ENCODE measurements at regions of chr17 and their contacts with region 1.

Region 1: DNA sequence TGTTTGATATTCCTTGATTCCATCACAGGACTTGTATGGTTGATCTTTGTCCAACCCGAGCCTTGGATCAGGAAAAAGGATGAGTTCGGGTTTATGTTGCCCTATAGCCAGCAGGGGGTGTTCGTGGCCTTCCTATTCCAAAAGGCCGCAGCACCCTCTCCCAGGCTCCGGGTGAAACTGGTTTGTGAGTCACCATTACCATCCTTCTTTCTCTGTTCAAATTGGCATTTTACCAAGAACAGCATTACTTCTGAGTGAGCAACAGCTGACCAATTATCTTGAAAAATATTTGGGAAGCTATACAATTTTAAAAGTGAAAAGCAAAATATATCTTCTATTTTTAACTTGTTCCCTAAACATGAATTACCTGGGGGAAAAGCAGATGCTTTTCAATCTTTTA is 24.3 kb upstream of the KRT20 start:
- DNase-seq: peak; percentile 79 to 89
- H3K4me3 ChIP-seq: no peak overlapping the region
- H3K27ac ChIP-seq: peak overlapping the region; percentile 23 to 59
- H3K4me1 ChIP-seq: peaks cover 0 to 29% (median 14%) of the 10 kb centered on the region in 4 donors
- H3K27me3 ChIP-seq: peaks cover 0 to 7% of the 10 kb centered on the region in 2 donors
- CTCF ChIP-seq: peak; percentile 70 to 86

Region 2: DNA sequence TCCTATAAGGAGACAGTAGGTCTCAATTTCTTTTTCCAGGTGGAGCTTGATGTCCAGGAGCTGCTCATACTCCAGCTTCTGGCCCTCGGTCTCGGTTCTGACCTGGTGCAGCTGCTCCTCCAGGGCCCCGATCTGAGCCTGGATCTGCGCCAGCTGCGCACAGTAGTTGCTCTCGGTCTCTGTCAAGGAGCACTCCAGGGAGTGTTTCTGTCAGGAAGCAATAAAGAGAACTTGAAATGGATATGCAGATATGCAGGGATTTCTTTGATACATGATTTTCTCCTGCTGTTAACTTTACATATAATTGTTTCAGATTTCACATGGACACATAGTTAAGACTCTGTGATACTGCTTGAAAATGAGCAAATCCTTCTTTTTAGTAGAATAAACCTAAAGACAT is 159.0 kb before region 1 on chr17:
- intact Hi-C with region 1: no loop called
- DNase-seq: no peak
- H3K4me3 ChIP-seq: no peak overlapping the region
- H3K27ac ChIP-seq: no peak overlapping the region
- H3K4me1 ChIP-seq: no peaks in the 10 kb centered on the region
- H3K27me3 ChIP-seq: peaks cover 0 to 23% of the 10 kb centered on the region in 2 donors
- CTCF ChIP-seq: no peak

Region 3: DNA sequence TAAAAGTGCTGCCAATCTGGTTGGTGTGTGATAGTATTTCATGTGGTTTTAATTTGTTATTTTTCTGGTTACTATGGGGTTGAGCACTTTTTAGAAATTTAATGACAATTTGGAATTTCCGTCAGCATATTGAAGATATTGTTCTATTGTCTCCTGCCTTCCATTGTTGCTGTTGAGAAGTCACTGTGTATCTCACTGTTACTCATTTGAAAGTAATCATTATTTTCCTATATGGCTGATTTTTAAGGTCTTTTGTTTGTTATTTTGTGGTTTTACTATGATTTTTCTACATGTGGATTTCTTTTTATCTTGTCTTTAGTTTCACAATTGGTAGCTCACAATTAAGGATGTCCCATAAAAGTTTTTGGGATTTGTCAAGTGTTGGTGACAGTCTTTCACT is 145.6 kb before region 1 on chr17:
- intact Hi-C with region 1: no loop called
- DNase-seq: no peak
- H3K4me3 ChIP-seq: no peak overlapping the region
- H3K27ac ChIP-seq: no peak overlapping the region
- H3K4me1 ChIP-seq: no peaks in the 10 kb centered on the region
- H3K27me3 ChIP-seq: peaks cover 0 to 8% of the 10 kb centered on the region in 2 donors
- CTCF ChIP-seq: no peak

Region 4: DNA sequence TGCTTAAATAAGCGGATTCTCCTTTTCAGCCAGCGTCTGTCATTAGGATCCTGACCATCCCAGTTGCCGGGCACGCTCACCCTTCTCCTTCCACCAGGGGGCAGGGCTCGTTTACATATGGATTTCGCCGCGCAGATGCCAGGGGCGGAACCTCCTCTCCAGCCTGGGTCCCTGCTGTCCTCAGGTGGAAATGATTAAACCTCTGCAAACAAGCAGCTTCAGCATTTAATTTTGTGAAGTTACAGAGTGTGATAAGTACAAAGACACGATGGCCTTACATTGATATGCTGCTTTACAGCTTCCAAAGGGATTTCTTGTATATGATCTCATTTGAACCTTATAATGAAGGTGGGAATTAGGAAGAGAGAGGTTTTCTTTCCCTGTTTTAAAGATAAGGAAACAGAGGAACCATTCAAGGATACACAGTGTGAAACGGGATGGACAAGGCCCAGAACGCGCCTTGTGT is 105.7 kb before region 1 on chr17:
- intact Hi-C with region 1: loop called (anchors 10 kb)
- DNase-seq: peak; percentile 76 to 80
- H3K4me3 ChIP-seq: no peak overlapping the region
- H3K27ac ChIP-seq: no peak overlapping the region
- H3K4me1 ChIP-seq: no peaks in the 10 kb centered on the region
- H3K27me3 ChIP-seq: peaks cover 0 to 41% of the 10 kb centered on the region in 2 donors
- CTCF ChIP-seq: peak; percentile 74 to 77

Region 5: GRCh38 chr17:40937384-40937819 is 28.1 kb after region 1 on chr17 and contains the start of gene KRT23:
- intact Hi-C with region 1: no loop called
- DNase-seq: no peak
- H3K4me3 ChIP-seq: no peak within 1 kb of the TSS
- H3K27ac ChIP-seq: no peak within 1 kb of the TSS
- H3K4me1 ChIP-seq: peaks cover 0 to 5% (median 0%) of the 10 kb centered on the region in 4 donors
- H3K27me3 ChIP-seq: no peaks in the 10 kb centered on the region
- CTCF ChIP-seq: no peak

Region 6: DNA sequence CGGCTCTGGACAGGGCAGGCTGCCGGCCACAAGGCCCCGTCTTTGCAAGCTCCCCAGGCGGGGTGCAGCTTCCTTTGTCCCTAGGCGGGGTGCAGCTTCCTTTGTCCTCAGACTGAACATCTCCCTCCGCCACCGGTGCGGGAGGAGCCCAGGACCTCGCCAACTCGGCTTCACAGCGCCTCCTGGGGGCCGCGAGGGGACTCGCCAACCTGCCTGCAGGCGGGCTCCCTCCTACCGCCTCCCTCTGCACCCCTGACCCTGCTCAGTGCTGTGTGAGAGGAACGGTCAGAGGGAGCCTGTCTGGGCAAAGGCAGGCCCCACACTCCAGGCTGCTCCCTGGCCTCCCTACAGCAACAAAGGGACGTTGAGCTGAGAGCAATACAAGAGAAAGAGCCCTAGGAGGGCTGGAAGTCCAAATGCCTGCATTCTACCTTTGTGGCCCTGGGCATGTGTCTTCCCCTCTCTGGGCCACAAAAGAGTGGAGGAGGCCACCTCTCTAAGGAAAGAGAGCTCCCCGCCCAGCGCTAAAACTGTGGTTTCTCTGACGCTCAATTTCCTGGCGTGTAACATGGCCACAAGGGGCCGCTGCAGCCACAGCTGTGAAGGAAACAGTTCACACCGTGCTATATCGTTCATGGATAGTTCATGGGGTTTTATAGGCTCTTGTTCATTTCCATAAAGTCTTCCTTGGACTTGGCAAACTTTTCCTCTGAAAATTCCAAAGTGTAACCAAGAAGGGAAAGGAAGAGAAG is 639.7 kb after region 1 on chr17:
- intact Hi-C with region 1: loop called (anchors 5 kb)
- DNase-seq: peak; percentile 84 to 87
- H3K4me3 ChIP-seq: peak overlapping the region; percentile 4 to 23
- H3K27ac ChIP-seq: peak overlapping the region; percentile 61 to 62
- H3K4me1 ChIP-seq: peaks cover 0 to 28% (median 25%) of the 10 kb centered on the region in 4 donors
- H3K27me3 ChIP-seq: no peaks in the 10 kb centered on the region
- CTCF ChIP-seq: peak; percentile 84 to 90

Region 7: DNA sequence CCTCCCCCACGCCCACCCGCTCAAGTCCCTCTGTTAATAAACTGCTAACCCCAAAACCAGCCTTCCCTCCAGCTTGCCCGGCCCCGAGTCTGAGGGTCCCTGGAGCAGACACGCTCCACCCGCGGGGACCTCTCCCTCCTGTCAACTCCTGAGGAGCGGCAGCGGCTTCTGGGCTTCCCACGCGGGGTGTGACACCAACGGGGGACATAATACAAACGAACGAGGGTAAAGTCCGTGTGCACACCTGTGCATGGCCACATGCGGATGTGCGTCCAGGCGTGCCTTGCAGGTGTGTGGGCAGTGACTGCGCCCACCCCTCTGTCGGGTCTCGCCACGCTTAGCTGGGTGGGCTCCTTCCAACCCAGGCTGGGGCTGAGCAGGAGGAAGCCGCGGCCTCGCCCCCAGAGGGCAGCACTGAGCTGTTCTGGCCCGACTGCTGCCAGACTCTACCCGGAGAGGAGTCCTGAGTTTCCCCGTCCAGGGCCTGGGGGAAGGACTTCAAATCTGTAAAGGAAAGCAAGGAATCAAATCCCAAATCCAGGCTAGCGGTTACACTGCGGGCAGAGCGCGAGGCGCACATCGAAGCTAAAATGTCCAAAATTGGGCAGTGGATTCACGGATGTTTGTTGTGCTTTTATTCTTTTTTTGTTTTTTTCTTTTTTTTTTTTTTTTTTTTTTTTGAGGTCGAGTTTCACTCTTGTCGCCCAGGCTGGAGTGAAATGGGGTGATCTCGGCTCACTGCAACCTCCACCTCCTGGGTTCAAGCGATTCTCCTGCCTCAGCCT is 739.3 kb after region 1 on chr17:
- intact Hi-C with region 1: loop called (anchors 5 kb)
- DNase-seq: peak; percentile 79 to 91
- H3K4me3 ChIP-seq: peak overlapping the region; percentile 30 to 47
- H3K27ac ChIP-seq: peak overlapping the region; percentile 50 to 68
- H3K4me1 ChIP-seq: peaks cover 3 to 46% (median 26%) of the 10 kb centered on the region in 4 donors
- H3K27me3 ChIP-seq: no peaks in the 10 kb centered on the region
- CTCF ChIP-seq: peak; percentile 94

Region 8: GRCh38 chr17:41665566-41666236 is 756.4 kb after region 1 on chr17:
- intact Hi-C with region 1: loop called (anchors 5 kb)
- DNase-seq: peak; percentile 78 to 93
- H3K4me3 ChIP-seq: peak overlapping the region; percentile 50 to 60
- H3K27ac ChIP-seq: peak overlapping the region; percentile 76 to 80
- H3K4me1 ChIP-seq: peaks cover 0 to 30% (median 19%) of the 10 kb centered on the region in 4 donors
- H3K27me3 ChIP-seq: no peaks in the 10 kb centered on the region
- CTCF ChIP-seq: peak; percentile 95 to 96

Measured in tibial artery (tissue), 4 donors.